ENCODE measurements at regions of chr18 and their contacts with region 1.

Region 1: DNA sequence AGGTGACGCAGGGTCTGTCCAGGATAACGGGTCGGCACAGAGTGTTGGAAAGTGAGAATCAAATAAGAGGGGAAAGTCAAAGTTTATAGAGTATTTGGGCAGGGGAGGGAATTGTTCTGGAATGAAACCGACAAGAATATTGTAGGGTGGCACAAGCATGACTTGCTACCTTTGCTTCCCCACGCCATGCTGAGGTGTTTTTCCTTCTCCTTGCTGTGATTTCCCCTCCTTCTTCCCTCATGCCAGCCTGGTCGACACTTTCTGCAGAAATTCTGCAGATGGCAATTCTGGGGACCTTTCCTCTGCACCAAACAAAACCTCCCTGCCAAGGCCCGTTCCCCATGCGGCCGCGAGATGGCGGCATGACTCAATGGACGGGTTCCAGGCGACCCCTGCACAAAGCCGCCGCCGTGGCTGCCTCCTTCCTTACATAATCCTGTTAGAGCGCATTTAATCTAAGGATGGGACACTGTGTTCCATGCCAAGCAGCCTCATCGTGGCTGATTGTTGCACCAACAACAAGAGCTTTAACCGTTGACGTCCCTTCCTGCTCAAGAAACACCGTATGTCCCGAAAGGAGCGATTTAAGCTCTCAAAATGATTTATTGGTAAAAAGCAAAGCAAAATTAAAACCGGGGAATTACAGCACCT is at the start of gene MRO:
- DNase-seq: peak; percentile 88
- ATAC-seq: peak; percentile 99
- H3K4me3 Mint-ChIP-seq: no peak within 1 kb of the TSS
- H3K27ac Mint-ChIP-seq: no peak within 1 kb of the TSS
- H3K4me1 Mint-ChIP-seq: no peaks in the 10 kb centered on the region
- H3K27me3 Mint-ChIP-seq: peaks cover 15% of the 10 kb centered on the region
- CTCF ChIP-seq: peak; percentile 85
- total RNA-seq, gene MRO: not detected

Region 2: DNA sequence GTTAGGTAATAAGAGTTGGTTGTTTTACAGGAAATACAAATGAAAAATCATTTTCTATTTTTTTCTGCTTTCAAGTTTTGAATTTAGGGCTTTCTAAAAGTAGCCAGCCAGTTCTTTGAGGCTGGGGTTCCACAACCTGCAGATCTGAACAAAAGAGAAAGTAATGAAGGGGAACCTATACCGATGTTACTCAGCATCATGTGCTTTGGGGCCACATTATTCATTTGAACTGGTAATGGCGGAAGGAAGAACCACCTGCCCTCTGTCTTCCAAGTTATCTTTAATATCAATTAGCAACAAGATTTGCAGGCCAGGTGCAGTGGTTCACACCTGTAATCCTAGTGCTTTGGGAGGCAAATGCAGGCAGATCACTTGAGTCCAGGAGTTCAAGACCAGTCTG is 12.9 kb after region 1 on chr18:
- CTCF ChIA-PET with region 1: interaction called, 15 read pairs
- POLR2A ChIA-PET with region 1: no interaction called
- intact Hi-C with region 1: no loop called
- DNase-seq: no peak
- ATAC-seq: no peak
- H3K4me3 Mint-ChIP-seq: no peak overlapping the region
- H3K27ac Mint-ChIP-seq: no peak overlapping the region
- H3K4me1 Mint-ChIP-seq: peaks cover 3% of the 10 kb centered on the region
- H3K27me3 Mint-ChIP-seq: peaks cover 4% of the 10 kb centered on the region
- CTCF ChIP-seq: no peak

Region 3: GRCh38 chr18:50839996-50840395 is 20.1 kb after region 1 on chr18:
- CTCF ChIA-PET with region 1: interaction called, 15 read pairs
- POLR2A ChIA-PET with region 1: no interaction called
- intact Hi-C with region 1: no loop called
- DNase-seq: no peak
- ATAC-seq: no peak
- H3K4me3 Mint-ChIP-seq: no peak overlapping the region
- H3K27ac Mint-ChIP-seq: no peak overlapping the region
- H3K4me1 Mint-ChIP-seq: peaks cover 3% of the 10 kb centered on the region
- H3K27me3 Mint-ChIP-seq: peaks cover 3% of the 10 kb centered on the region
- CTCF ChIP-seq: no peak

Region 4: GRCh38 chr18:50847192-50847591 is 27.3 kb after region 1 on chr18:
- CTCF ChIA-PET with region 1: interaction called, 10 read pairs
- POLR2A ChIA-PET with region 1: no interaction called
- intact Hi-C with region 1: no loop called
- DNase-seq: no peak
- ATAC-seq: no peak
- H3K4me3 Mint-ChIP-seq: no peak overlapping the region
- H3K27ac Mint-ChIP-seq: no peak overlapping the region
- H3K4me1 Mint-ChIP-seq: no peaks in the 10 kb centered on the region
- H3K27me3 Mint-ChIP-seq: no peaks in the 10 kb centered on the region
- CTCF ChIP-seq: no peak

Region 5: DNA sequence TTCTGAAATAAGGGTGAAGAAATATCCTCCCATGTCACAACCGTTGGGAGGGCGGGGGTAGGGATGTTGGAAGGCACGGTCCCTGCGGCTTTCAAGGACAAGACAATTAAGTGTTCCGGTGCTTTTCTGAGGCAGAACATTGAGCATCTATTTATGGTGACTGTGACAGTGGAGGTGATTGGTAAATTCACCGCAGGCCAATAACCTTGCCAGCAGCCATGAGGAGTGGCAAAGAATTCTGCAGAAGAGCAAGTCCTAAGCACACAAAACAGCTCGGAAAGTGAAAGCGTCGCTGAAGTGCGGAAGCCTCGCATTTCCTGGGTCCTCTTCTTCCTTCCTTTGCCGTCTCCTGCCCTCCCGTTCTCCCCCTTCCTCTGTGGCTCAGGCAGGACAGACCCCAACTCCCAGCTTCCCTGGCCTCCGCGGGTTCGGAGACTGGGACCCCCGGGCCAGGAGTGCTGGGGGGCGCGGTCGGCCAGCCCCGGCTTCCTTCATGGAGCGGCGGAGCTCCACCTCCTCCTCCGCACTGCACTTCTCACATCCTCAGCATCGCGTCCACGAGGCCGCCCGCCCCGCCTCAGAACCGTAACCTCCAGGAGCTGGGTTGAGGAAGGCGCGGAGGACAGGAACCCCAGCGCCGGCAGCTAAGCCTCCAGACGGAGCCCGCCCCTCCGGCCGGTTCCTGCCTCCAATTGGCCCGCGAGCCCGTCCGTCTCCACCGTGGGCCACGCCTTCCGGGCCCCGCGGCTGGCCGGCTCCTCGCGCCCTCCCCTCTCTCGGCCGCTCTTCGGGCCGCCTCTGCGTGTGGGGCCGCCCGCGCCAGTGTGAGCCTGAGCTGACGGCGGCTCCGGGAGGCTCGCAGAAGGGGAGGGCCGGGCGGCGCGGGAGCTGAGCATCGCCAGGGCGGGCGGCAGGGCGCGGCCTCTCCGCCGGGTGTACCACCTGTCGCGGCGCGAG is 58.8 kb after region 1 on chr18 and contains the start of gene ME2:
- CTCF ChIA-PET with region 1: interaction called, 10 read pairs
- POLR2A ChIA-PET with region 1: interaction called, 3 read pairs
- intact Hi-C with region 1: no loop called
- DNase-seq: peak; percentile 91
- ATAC-seq: peak; percentile 96
- H3K4me3 Mint-ChIP-seq: peak within 1 kb of the TSS; percentile 91
- H3K27ac Mint-ChIP-seq: peak within 1 kb of the TSS; percentile 98
- H3K4me1 Mint-ChIP-seq: peaks cover 20% of the 10 kb centered on the region
- H3K27me3 Mint-ChIP-seq: peaks cover under 1% of the 10 kb centered on the region
- CTCF ChIP-seq: no peak
- total RNA-seq, gene ME2: 138 to 141 TPM

Region 6: GRCh38 chr18:51051105-51051712 is 231.4 kb after region 1 on chr18:
- CTCF ChIA-PET with region 1: interaction called, 36 read pairs
- POLR2A ChIA-PET with region 1: no interaction called
- intact Hi-C with region 1: loop called (anchors 5 kb)
- DNase-seq: no peak
- ATAC-seq: peak; percentile 90
- H3K4me3 Mint-ChIP-seq: no peak overlapping the region
- H3K27ac Mint-ChIP-seq: no peak overlapping the region
- H3K4me1 Mint-ChIP-seq: peaks cover 38% of the 10 kb centered on the region
- H3K27me3 Mint-ChIP-seq: no peaks in the 10 kb centered on the region
- CTCF ChIP-seq: peak; percentile 78

Region 7: GRCh38 chr18:51082571-51083267 is 262.9 kb after region 1 on chr18:
- CTCF ChIA-PET with region 1: no interaction called
- POLR2A ChIA-PET with region 1: no interaction called
- intact Hi-C with region 1: loop called (anchors 10 kb)
- DNase-seq: no peak
- ATAC-seq: peak; percentile 88
- H3K4me3 Mint-ChIP-seq: peak overlapping the region; percentile 15
- H3K27ac Mint-ChIP-seq: peak overlapping the region; percentile 95
- H3K4me1 Mint-ChIP-seq: peaks cover 23% of the 10 kb centered on the region
- H3K27me3 Mint-ChIP-seq: no peaks in the 10 kb centered on the region
- CTCF ChIP-seq: no peak